Naive thymus-derived CD8-positive, alpha-beta T cell (primary cell): ENCODE measurements at regions of chr17 and their contacts with region 1.

Region 1: GRCh38 chr17:76141212-76142038 is at the start of gene FOXJ1:
- DNase-seq: peak; percentile 83 to 98 (median 94)
- ATAC-seq: peak; percentile 60 to 73
- H3K4me3 Mint-ChIP-seq: peak within 1 kb of the TSS; percentile 81 to 92 (median 87)
- H3K27ac Mint-ChIP-seq: peak within 1 kb of the TSS; percentile 92 to 100 (median 97)
- H3K4me1 Mint-ChIP-seq: peaks cover 38 to 73% (median 68%) of the 10 kb centered on the region in 4 donors
- H3K27me3 Mint-ChIP-seq: peaks cover 0 to 2% (median 0%) of the 10 kb centered on the region in 5 donors
- polyA plus RNA-seq, gene FOXJ1: 0.28 to 2.8 (median 1.8) TPM

Region 2: GRCh38 chr17:76039121-76039520 is 102.3 kb before region 1 on chr17:
- POLR2A ChIA-PET with region 1: no interaction called
- DNase-seq: no peak
- ATAC-seq: no peak
- H3K4me3 Mint-ChIP-seq: no peak overlapping the region
- H3K27ac Mint-ChIP-seq: peak overlapping the region in 8 of 10 donors; percentile 10 to 85 (median 60)
- H3K4me1 Mint-ChIP-seq: peaks cover 6 to 29% (median 14%) of the 10 kb centered on the region in 4 donors
- H3K27me3 Mint-ChIP-seq: no peaks in the 10 kb centered on the region

Region 3: DNA sequence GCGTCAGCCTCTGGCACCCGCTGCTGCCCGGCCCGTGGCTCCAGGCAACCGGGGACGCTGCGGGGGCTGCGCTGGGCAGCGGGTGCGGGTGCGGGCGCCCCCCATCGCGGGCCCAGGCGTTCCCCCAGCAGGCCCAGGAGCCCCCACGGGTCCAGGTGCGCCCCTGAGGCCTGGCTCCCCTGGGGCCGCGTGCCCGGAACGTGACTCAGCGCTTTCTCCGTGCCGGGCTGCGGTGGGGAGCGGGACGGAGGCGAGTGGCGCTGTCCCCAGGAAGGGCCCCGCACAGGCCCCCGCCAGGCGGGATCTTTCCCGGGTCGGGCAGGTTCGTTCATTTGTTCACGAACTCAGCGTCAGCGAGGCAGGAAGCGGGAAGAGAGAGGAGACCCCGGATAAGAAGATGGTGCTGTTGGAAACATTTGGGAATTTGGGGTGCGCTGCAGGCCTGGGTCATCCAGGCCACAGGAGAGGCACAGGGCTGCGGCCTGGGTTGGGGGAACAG is 19.4 kb before region 1 on chr17:
- POLR2A ChIA-PET with region 1: interaction called, 24 read pairs
- DNase-seq: no peak
- ATAC-seq: peak; percentile 13 to 37
- H3K4me3 Mint-ChIP-seq: peak overlapping the region; percentile 28 to 78 (median 63)
- H3K27ac Mint-ChIP-seq: peak overlapping the region in 8 of 10 donors; percentile 46 to 90 (median 80)
- H3K4me1 Mint-ChIP-seq: peaks cover 18 to 40% (median 31%) of the 10 kb centered on the region in 4 donors
- H3K27me3 Mint-ChIP-seq: no peaks in the 10 kb centered on the region

Region 4: DNA sequence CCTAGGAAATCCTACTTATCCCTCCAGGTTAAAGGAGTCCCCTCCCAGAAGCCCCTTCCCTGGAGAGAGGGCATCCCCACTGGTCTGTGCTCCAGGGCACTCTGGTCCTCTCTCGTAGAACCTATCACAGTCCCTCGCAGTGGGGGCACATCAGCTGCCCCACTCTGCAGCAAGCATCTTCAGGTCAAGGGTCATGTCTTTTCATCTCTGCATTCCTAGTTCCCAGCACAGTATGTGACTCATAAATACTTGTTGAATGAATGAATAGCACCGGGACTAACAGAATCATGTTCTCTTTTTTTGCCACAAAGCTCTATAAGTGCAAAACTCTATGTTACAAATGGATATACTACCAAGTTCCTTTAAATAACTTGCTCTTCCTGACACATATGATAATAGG is 62.9 kb after region 1 on chr17:
- POLR2A ChIA-PET with region 1: interaction called, 14 read pairs
- DNase-seq: no peak
- ATAC-seq: no peak
- H3K4me3 Mint-ChIP-seq: no peak overlapping the region
- H3K27ac Mint-ChIP-seq: peak overlapping the region; percentile 17 to 82 (median 52)
- H3K4me1 Mint-ChIP-seq: peaks cover 20 to 67% (median 64%) of the 10 kb centered on the region in 4 donors
- H3K27me3 Mint-ChIP-seq: no peaks in the 10 kb centered on the region

Region 5: GRCh38 chr17:76232342-76232741 is 90.9 kb after region 1 on chr17:
- POLR2A ChIA-PET with region 1: no interaction called
- DNase-seq: no peak
- ATAC-seq: no peak
- H3K4me3 Mint-ChIP-seq: no peak overlapping the region
- H3K27ac Mint-ChIP-seq: peak overlapping the region in 5 of 10 donors; percentile 4 to 60 (median 31)
- H3K4me1 Mint-ChIP-seq: peaks cover 21 to 48% (median 41%) of the 10 kb centered on the region in 4 donors
- H3K27me3 Mint-ChIP-seq: no peaks in the 10 kb centered on the region

Region 6: GRCh38 chr17:76252040-76252954 is 110.9 kb after region 1 on chr17:
- POLR2A ChIA-PET with region 1: interaction called, 17 read pairs
- DNase-seq: peak in 4 of 10 donors; percentile 26 to 56 (median 48)
- ATAC-seq: peak; percentile 48 to 71
- H3K4me3 Mint-ChIP-seq: peak overlapping the region; percentile 63 to 86 (median 77)
- H3K27ac Mint-ChIP-seq: peak overlapping the region; percentile 90 to 98 (median 92)
- H3K4me1 Mint-ChIP-seq: peaks cover 33 to 69% (median 66%) of the 10 kb centered on the region in 4 donors
- H3K27me3 Mint-ChIP-seq: no peaks in the 10 kb centered on the region

Region 7: DNA sequence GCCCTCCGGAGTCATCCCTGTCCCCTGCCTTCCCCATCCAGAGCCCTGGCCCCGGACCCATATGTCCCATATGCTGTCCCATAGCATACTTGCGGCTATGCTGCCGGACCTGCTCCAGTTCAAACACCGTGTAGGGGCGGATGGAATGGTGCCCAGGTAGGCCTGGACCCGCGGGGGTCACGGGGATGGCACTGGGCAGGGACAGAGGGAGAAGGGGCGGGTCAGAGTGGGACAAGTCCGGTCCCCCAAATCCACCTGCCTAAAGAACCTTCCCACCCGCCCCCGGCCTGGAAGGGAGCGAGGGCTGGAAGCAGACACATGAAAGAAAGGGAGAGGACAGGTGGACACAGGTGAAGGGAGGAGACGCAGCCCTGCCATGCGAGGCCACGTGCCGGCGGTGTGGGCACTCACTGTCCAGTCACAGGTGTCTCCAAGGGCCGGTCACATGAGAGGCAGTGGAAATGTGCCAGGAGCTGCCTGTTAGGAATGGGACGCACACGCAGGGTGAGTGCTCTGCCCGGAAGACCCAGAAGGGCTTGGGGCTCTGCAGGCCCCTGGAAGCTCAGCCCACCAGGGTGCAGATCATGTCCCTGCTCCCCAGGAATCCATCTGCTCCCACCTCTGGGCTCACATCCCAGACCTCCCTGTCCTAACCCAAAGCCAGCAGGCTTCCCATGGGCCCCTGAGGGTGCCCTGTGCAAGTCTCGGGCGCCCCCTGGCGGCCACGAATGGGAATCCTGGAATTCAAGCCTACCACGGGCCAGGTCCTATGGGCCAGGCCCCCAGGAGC is 137.7 kb after region 1 on chr17:
- POLR2A ChIA-PET with region 1: interaction called, 72 read pairs
- DNase-seq: peak; percentile 70 to 93 (median 83)
- ATAC-seq: peak; percentile 92
- H3K4me3 Mint-ChIP-seq: peak overlapping the region in 1 of 10 donors; percentile 20
- H3K27ac Mint-ChIP-seq: peak overlapping the region in 8 of 10 donors; percentile 20 to 86 (median 46)
- H3K4me1 Mint-ChIP-seq: peaks cover 16 to 38% (median 32%) of the 10 kb centered on the region in 4 donors
- H3K27me3 Mint-ChIP-seq: no peaks in the 10 kb centered on the region

Region 8: GRCh38 chr17:77420804-77421629 is 1279.6 kb after region 1 on chr17:
- POLR2A ChIA-PET with region 1: no interaction called
- DNase-seq: peak in 8 of 10 donors; percentile 51 to 76 (median 54)
- ATAC-seq: peak; percentile 59 to 64
- H3K4me3 Mint-ChIP-seq: peak overlapping the region; percentile 70 to 90 (median 78)
- H3K27ac Mint-ChIP-seq: peak overlapping the region; percentile 82 to 95 (median 90)
- H3K4me1 Mint-ChIP-seq: peaks cover 24 to 79% (median 62%) of the 10 kb centered on the region in 4 donors
- H3K27me3 Mint-ChIP-seq: no peaks in the 10 kb centered on the region